Activated naive CD4-positive, alpha-beta T cell treated with anti-CD3 and anti-CD28 coated beads for 36 hours (primary cell): ENCODE measurements at regions of chr2 and their contacts with region 1.

Region 1: DNA sequence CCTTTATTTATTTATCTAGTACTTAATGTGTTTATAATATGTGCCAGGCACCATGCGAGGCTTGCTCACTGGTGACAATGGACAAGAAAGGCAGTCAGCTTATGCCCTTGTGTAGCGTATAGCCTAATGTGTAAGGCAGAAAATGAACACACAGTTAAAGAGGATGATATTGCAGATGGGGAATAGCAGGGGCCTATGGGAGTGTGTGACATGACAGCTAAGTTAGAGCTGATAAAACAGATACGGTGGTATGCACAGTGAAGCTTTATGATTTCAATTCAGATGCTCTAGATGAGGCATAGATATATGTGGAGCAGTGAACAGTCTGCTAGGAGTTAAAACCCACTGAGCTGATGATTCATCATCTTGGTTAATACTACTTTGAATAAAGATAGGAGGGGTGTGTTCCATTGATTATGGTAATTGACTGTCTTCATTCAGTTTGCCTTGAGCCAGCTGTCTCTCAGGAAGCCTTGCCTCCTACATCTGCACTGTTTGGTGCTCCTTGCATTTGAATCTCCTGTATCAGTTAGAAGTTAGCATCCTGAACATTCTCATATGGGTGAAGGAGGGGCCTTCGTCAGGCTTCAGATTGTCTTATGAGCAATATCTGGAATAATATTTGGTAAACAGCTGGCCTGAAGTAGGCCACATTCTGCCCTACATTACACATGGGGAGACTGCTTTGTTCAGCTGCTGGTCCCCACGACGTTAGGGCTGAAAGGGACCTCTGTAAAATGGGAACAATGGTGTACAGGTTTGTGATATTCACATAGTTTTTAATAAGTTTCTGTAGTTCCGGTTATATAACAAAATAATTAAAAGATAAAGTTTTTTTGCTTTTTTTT is 13.2 kb downstream of the MAP4K4 start:
- DNase-seq: no peak
- H3K4me3 Mint-ChIP-seq: peak overlapping the region; percentile 23
- H3K27ac Mint-ChIP-seq: peak overlapping the region; percentile 59
- H3K4me1 Mint-ChIP-seq: peaks cover 83% of the 10 kb centered on the region
- H3K27me3 Mint-ChIP-seq: no peaks in the 10 kb centered on the region

Region 2: DNA sequence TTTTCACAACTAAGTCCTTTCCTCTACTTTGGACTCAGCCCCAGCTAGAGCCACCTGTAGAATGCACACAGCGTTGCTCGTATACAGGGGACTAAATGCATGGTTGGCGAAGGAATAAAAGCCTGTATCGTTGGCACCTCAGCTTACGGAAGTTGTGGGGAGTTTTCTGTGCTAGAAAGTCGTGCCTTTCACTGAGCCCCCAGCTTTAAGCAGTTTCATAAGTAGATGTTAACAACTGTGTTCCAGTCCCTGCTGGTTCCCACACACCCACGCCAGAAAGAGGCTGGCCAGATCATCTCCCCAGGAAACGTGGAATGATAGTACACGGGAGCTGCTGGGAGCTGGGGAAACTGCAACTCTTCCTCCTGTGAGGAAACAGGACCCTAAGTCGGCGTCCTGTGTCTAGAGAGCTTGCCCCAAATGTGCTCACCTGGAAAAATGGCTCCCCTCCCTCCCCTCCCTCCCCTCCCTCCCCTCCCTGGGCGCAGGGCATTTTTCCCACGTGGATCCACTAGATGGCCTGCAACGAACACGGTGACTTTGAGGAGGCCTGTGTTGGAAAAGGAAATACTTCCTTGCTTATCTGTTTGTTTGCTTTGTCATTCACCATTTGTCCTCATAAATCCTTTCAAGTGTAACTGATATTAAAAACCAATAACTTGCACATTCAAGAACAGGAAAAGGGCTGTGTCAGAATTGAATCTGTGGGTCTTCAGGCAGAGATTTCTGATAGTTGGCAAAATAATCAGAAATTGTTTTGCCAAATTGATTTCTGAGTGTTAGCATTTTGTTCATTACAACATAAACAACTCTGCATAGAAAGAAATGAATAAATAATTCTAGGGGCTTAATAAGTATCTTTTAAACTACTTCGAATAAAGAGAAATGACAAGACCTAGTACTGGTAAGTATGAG is 191.9 kb before region 1 on chr2:
- CTCF ChIA-PET with region 1: no interaction called
- intact Hi-C with region 1: no loop called
- DNase-seq: peak; percentile 43
- H3K4me3 Mint-ChIP-seq: no peak overlapping the region
- H3K27ac Mint-ChIP-seq: no peak overlapping the region
- H3K4me1 Mint-ChIP-seq: peaks cover 47% of the 10 kb centered on the region
- H3K27me3 Mint-ChIP-seq: no peaks in the 10 kb centered on the region

Region 3: DNA sequence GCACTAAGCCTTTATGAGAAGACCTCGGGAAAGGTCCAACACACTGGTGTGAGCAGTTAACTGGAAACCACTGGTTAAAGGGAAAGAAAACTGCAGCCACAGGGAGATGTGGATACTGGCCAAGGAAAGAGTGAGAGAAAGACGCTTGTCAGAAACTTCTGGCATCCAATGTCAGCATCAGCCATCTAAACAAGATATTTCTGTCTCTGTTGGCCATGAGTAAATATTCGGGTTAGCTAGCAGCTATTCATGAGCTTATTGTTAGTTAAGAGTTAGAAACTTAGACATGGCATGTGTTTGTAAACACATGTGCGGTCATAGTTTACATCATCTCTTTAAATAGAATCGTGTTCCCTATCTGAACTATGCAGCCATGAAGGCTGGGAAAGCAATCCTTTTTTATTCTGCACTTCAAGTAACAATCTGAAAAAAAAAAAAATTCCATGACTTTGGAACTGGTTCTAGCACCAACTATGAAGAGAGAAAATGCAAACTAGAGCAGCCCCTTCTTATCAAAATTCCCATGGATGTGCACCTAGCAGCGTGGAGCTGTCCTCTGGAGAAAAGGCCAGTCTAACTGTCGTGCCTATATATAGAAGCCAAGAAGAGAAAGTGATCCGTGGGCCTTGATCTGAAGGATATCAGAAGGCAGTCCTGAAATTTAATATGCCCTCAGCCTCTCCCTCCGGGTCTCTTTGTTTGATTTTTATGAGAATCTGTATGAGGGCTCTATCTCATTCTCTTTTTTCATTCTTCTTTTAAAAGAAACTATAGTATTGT is 151.8 kb before region 1 on chr2:
- CTCF ChIA-PET with region 1: no interaction called
- intact Hi-C with region 1: no loop called
- DNase-seq: no peak
- H3K4me3 Mint-ChIP-seq: no peak overlapping the region
- H3K27ac Mint-ChIP-seq: no peak overlapping the region
- H3K4me1 Mint-ChIP-seq: peaks cover 30% of the 10 kb centered on the region
- H3K27me3 Mint-ChIP-seq: no peaks in the 10 kb centered on the region

Region 4: DNA sequence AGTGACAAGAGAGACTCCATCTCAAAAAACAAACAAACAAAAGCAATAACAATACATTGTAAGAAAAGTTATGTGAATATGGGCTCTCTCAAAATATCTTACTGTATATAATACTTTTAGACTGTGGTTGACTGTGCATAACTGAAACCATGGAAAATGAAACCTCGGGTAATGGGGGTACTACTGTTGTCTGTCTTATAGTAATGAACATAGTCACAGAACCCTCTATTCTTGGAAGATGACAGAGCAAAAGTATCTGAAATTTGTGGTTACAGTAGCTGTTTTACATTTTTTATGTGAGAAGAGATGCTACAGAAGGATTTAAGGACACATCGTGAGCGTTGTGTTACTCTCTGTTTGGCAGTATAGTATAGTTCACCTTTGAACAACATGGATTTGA is 47.3 kb after region 1 on chr2:
- CTCF ChIA-PET with region 1: no interaction called
- intact Hi-C with region 1: loop called (anchors 1 kb)
- DNase-seq: peak; percentile 60
- H3K4me3 Mint-ChIP-seq: peak overlapping the region; percentile 48
- H3K27ac Mint-ChIP-seq: peak overlapping the region; percentile 81
- H3K4me1 Mint-ChIP-seq: peaks cover 77% of the 10 kb centered on the region
- H3K27me3 Mint-ChIP-seq: no peaks in the 10 kb centered on the region

Region 5: DNA sequence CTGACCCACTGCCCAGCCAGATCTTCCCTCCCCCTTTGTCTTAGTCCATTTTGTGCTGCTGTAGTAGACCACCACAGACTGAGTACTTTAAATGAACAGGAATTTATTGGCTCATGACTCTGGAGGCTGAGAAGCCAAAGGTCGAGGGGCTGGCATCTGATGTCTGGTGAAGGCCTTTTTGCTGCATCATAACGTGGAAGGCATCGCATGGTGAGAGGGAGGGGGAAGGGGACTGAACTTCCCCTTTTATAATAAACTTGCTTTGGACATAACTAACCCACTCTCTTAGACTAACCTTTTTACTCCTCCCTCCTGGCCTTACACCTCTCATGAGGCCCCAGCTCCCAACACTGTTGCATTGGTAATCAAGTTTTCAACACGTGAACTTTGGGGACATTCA is 70.6 kb after region 1 on chr2:
- CTCF ChIA-PET with region 1: interaction called, 4 read pairs
- intact Hi-C with region 1: loop called (anchors 2 kb)
- DNase-seq: no peak
- H3K4me3 Mint-ChIP-seq: peak overlapping the region; percentile 38
- H3K27ac Mint-ChIP-seq: peak overlapping the region; percentile 26
- H3K4me1 Mint-ChIP-seq: peaks cover 82% of the 10 kb centered on the region
- H3K27me3 Mint-ChIP-seq: no peaks in the 10 kb centered on the region